HCT116 (cell line): ENCODE measurements at regions of chr3 and their contacts with region 1.

Region 1: GRCh38 chr3:147616998-147617619 is 207.9 kb downstream of the ZIC1 start:
- DNase-seq: peak; percentile 12
- ATAC-seq: no peak
- H3K4me3 ChIP-seq: no peak overlapping the region
- H3K27ac ChIP-seq: no peak overlapping the region
- H3K4me1 ChIP-seq: no peaks in the 10 kb centered on the region
- H3K27me3 ChIP-seq: no peaks in the 10 kb centered on the region
- CTCF ChIP-seq: peak; percentile 44 to 76 (median 44); a peak in 5 of 6 replicates
- POLR2A ChIP-seq: no peak
- RAD21 ChIP-seq: peak; percentile 56

Region 2: GRCh38 chr3:147191795-147192385 is 425.2 kb before region 1 on chr3:
- CTCF ChIA-PET with region 1: no interaction called
- POLR2A ChIA-PET with region 1: no interaction called
- RAD21 ChIA-PET with region 1: no interaction called
- intact Hi-C with region 1: loop called (anchors 10 kb)
- DNase-seq: peak; percentile 68
- ATAC-seq: peak; percentile 60; the same call in 1 of the 2 replicates
- H3K4me3 ChIP-seq: no peak overlapping the region
- H3K27ac ChIP-seq: no peak overlapping the region
- H3K4me1 ChIP-seq: no peaks in the 10 kb centered on the region
- H3K27me3 ChIP-seq: no peaks in the 10 kb centered on the region
- CTCF ChIP-seq: peak; percentile 42 to 86 (median 82); a peak in 5 of 6 replicates
- POLR2A ChIP-seq: no peak
- RAD21 ChIP-seq: peak; percentile 67

Region 3: GRCh38 chr3:147383617-147384016 is 233.5 kb before region 1 on chr3:
- CTCF ChIA-PET with region 1: interaction called, 8 read pairs
- POLR2A ChIA-PET with region 1: no interaction called
- RAD21 ChIA-PET with region 1: no interaction called
- intact Hi-C with region 1: loop called (anchors 5 kb)
- DNase-seq: peak; percentile 3
- ATAC-seq: peak; percentile 78
- H3K4me3 ChIP-seq: no peak overlapping the region
- H3K27ac ChIP-seq: no peak overlapping the region
- H3K4me1 ChIP-seq: no peaks in the 10 kb centered on the region
- H3K27me3 ChIP-seq: no peaks in the 10 kb centered on the region
- CTCF ChIP-seq: peak; percentile 56 to 65 (median 61)
- POLR2A ChIP-seq: no peak
- RAD21 ChIP-seq: peak; percentile 51

Region 4: GRCh38 chr3:147799601-147800000 is 182.5 kb after region 1 on chr3:
- CTCF ChIA-PET with region 1: no interaction called
- POLR2A ChIA-PET with region 1: no interaction called
- RAD21 ChIA-PET with region 1: no interaction called
- intact Hi-C with region 1: no loop called
- DNase-seq: no peak
- ATAC-seq: no peak
- H3K4me3 ChIP-seq: no peak overlapping the region
- H3K27ac ChIP-seq: no peak overlapping the region
- H3K4me1 ChIP-seq: no peaks in the 10 kb centered on the region
- H3K27me3 ChIP-seq: no peaks in the 10 kb centered on the region
- CTCF ChIP-seq: no peak
- POLR2A ChIP-seq: no peak
- RAD21 ChIP-seq: no peak

Region 5: DNA sequence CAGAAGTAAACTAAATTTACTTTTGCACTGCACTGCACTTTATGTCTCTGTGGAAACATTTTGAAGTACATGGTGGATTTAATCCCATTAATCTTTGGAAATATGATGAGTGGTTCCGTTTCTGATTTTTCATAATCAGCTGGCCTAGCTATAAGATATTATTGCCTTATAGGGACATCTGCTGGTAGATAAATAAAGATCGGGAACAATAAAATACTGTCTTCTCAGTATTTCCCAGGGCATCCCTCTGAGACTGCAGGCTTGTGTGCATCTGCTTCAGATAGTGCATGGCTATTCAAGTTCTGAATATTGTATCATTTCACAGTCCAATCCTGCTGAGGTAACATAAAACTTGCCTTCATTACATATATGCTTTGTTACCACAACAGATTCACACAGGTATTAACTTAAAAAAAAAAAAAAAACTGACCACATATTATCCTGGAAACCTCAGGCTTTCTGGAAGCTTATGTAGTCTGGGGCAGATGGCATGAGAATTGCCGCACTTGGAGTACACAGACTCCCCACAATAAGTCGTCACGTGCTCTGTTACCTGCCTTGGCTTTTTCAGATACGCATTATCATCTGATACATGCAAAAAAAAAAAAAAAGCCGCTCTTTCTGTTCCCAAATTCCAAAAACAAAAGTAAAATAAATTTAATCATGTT is 749.8 kb after region 1 on chr3:
- CTCF ChIA-PET with region 1: interaction called, 4 read pairs
- POLR2A ChIA-PET with region 1: no interaction called
- RAD21 ChIA-PET with region 1: no interaction called
- intact Hi-C with region 1: loop called (anchors 10 kb)
- DNase-seq: no peak
- ATAC-seq: peak; percentile 72
- H3K4me3 ChIP-seq: no peak overlapping the region
- H3K27ac ChIP-seq: no peak overlapping the region
- H3K4me1 ChIP-seq: no peaks in the 10 kb centered on the region
- H3K27me3 ChIP-seq: no peaks in the 10 kb centered on the region
- CTCF ChIP-seq: peak; percentile 17 to 42 (median 35); a peak in 4 of 6 replicates
- POLR2A ChIP-seq: no peak
- RAD21 ChIP-seq: peak; percentile 66